ENCODE measurements at regions of chrX and their contacts with region 1.

Region 1: DNA sequence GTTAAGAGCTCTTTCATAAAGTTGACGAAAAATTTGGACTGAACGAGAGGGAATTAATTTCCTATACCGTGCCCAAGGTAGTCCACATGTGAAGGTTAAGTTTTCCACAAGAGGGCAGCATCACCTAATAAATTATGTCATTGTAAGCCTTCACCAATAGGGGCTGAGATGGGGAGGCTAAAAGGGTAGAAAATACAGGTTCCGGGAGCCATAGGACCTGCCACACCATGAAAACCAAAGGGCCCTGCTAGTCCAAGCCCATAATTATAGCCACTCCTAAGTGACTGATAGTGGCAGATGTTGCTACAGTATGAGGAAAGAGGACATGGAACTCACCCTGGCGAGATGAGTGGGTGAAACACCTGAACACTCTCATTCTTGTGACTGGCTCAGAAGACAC is 122.2 kb downstream of the SHROOM4 start:
- DNase-seq: no peak
- H3K4me3 ChIP-seq: no peak overlapping the region
- H3K27ac ChIP-seq: no peak overlapping the region
- H3K4me1 ChIP-seq: no peaks in the 10 kb centered on the region
- H3K27me3 ChIP-seq: no peaks in the 10 kb centered on the region
- CTCF ChIP-seq: peak; percentile 44 to 57

Region 2: DNA sequence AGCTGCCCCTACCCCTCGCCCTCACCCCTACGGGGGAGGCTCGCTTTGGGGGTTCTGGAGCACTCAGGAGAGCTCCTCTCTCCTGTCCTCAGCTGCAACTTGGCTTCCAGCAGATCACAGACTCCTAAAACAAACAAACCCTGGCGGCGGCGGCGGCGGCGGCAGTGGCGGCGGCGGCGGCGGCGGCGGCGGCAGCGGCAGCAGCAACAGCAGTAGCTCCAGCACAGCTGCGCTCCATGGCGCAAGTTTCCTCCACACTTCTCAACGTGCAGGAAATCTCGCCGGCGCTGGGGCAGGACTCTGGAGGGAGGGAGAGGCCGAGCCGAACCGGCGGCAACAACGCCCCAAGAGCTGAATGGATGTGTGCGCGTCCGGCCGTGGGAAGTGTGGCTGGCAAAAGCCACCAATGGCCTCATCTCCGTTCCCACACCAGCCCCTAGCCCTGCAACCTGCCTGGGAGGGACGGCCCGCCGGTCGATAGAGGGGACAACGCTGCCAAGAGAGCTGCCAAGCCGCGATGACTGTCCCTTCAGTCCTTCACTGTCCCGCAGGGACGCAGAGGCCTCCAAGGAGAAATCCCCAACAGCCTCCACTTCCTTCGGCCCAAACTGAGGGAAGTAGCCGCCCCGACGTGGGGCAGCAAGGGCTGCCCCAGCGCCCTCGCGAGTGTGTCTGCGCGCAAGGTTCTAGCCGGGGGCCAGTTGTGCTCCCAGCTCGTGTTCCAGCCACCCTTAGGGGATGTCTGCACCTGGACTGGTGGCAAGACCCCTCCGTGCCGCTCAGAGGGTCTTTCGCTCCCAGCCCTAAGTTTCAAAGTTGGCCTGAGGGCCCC is 121.4 kb after region 1 on chrX:
- intact Hi-C with region 1: no loop called
- DNase-seq: peak; percentile 22 to 63
- H3K4me3 ChIP-seq: peak overlapping the region; percentile 58 to 63
- H3K27ac ChIP-seq: peak overlapping the region; percentile 63 to 71
- H3K4me1 ChIP-seq: no peaks in the 10 kb centered on the region
- H3K27me3 ChIP-seq: no peaks in the 10 kb centered on the region
- CTCF ChIP-seq: no peak

Region 3: GRCh38 chrX:50905334-50905733 is 213.5 kb after region 1 on chrX:
- intact Hi-C with region 1: loop called (anchors 5 kb)
- DNase-seq: no peak
- H3K4me3 ChIP-seq: no peak overlapping the region
- H3K27ac ChIP-seq: no peak overlapping the region
- H3K4me1 ChIP-seq: no peaks in the 10 kb centered on the region
- H3K27me3 ChIP-seq: no peaks in the 10 kb centered on the region
- CTCF ChIP-seq: no peak

Region 4: DNA sequence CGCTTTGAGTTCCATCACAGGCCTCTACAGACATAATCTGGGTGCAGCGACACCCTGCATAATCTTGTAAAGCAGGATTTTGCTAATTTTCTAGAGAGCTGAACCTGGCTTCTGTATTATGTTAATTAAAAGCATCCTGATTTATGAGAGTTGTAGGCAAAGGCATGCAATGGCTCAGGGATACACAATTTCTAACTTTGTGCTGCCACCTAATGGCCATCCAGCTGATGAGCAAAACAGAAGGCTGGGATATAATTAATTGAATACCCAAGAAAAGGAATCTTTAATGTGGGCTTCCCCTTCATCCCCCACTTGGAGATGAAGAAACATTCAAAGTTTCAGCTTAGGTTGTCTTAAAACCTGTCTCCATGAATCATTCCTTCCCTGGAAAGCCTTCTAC is 296.8 kb after region 1 on chrX:
- intact Hi-C with region 1: loop called (anchors 5 kb)
- DNase-seq: no peak
- H3K4me3 ChIP-seq: no peak overlapping the region
- H3K27ac ChIP-seq: no peak overlapping the region
- H3K4me1 ChIP-seq: no peaks in the 10 kb centered on the region
- H3K27me3 ChIP-seq: no peaks in the 10 kb centered on the region
- CTCF ChIP-seq: peak in 1 of 2 experiments; percentile 28

Measured in tibial artery (tissue), 4 donors.